ENCODE measurements at regions of chr18 and their contacts with region 1.

Region 1: DNA sequence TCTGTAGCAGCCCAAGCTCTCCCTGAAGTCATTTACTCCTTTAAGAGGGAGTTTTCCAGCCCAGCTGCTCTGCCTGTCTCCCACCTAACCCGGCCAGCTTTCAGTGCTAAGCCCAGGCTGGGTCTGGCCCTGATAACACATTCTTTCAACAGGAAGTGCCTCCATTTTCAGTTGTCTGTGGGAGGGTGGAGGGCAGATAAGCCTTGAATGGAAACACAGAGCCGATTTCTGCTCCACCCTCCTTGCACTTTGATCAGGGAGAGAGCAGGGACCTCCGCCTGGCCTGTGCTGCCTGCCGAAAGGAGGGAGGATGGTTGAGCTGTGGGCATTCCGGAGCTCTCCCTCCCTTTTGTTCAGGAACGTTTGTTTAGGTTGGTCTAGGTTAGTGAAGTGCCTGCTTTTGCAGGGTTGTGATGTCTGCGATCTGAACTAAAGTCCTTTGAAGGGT is 24.8 kb downstream of the GATA6 start:
- DNase-seq: peak; percentile 68
- H3K4me3 Mint-ChIP-seq: peak overlapping the region; percentile 64
- H3K27ac Mint-ChIP-seq: peak overlapping the region; percentile 94
- H3K4me1 Mint-ChIP-seq: peaks cover 86% of the 10 kb centered on the region
- H3K27me3 Mint-ChIP-seq: no peaks in the 10 kb centered on the region
- CTCF ChIP-seq: no peak

Region 2: DNA sequence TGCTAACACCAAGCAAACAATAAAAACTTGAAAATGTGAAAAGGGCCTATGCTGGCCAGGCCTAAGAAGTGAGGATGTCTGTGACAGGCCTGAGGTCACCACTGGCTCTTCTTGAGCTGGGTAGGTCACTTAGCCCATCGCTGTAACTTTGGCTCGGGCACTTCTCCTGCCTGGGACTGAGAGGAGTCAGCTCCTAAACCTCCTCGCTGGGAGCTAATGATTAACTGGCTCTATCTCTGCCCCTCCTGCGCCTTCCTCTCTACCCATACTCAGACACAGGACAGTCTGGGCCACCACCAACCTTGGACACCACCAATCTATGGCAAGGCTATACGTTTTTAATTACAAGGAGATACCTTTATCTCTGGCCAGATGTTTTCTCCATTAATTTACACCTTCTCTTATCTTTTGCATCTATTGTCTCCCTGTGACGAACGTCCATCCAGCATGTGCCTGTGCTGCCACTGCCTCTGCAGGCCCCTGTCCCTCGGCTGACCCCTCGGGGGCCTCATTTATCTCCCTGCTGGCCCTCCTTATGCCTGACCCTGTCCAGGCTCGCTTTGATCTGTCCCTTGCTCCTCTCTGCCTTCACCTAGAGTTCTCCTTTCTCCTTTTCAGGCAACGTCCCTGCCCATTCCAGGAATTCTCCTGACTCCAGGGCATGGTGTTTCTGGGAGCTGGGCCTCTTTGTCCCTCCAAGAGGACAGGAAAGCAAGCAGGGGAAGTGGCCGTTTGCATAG is 173.9 kb before region 1 on chr18:
- CTCF ChIA-PET with region 1: no interaction called
- intact Hi-C with region 1: no loop called
- DNase-seq: no peak
- H3K4me3 Mint-ChIP-seq: no peak overlapping the region
- H3K27ac Mint-ChIP-seq: no peak overlapping the region
- H3K4me1 Mint-ChIP-seq: peaks cover 22% of the 10 kb centered on the region
- H3K27me3 Mint-ChIP-seq: no peaks in the 10 kb centered on the region
- CTCF ChIP-seq: no peak

Region 3: DNA sequence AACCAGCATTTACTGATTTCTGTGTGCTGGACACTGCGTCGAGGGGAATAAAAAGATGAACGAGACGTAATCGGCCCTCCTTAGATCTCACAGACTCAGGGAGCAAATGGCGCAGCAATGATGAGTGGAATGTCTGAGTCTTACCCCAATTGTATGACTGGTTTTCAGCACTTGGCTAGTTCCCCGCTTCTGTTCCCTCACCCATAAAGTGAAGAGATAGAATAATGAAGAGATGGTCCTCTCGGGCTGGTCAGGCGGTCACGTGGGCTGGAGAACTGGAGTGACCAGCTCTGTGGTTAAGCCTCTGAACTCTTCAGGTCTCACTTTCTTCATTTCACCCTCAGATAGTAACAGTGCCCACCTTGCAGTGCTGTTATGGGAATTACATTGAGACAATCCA is 42.0 kb before region 1 on chr18:
- CTCF ChIA-PET with region 1: no interaction called
- intact Hi-C with region 1: no loop called
- DNase-seq: no peak
- H3K4me3 Mint-ChIP-seq: no peak overlapping the region
- H3K27ac Mint-ChIP-seq: no peak overlapping the region
- H3K4me1 Mint-ChIP-seq: no peaks in the 10 kb centered on the region
- H3K27me3 Mint-ChIP-seq: peaks cover 9% of the 10 kb centered on the region
- CTCF ChIP-seq: no peak

Region 4: DNA sequence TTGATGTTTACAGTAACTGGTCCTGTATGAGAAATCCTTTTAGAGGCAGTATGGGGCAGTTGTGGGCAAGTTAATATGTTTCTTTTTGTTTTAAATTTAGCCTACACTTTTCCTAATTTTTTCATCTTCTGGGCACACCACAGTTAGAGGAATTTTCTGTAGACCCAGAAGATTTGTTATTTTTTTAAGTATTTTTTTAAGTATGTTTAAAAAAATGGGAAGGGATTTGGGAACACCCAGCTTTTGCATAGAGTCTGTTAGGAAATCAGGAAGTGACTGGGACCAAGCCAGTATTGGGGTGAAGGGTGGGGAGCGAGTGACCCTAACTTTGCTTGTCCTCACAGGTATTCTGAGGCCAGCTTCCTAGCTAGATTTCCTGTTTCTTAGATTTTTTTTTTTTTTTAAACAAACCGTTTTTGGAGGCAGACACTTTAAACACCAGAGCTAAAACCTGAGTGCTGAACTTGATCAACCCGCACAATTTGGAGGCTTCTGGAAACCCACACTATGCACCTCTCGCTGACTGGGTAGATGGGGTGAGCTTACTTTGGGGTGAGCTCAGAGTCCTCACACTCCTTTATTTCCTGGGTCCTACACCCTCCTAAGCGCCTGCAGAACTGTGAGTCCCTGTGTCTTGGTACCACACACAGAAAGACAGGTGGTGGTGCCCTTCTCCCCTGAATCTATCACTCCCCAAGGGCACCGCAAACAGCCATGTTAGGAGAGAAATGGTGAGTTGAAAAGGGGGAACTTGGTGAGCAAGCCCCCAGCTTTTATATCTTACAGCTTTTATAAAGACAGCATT is 19.6 kb before region 1 on chr18:
- CTCF ChIA-PET with region 1: interaction called, 10 read pairs
- intact Hi-C with region 1: loop called (anchors 2 kb)
- DNase-seq: no peak
- H3K4me3 Mint-ChIP-seq: peak overlapping the region; percentile 98
- H3K27ac Mint-ChIP-seq: peak overlapping the region; percentile 98
- H3K4me1 Mint-ChIP-seq: peaks cover 1% of the 10 kb centered on the region
- H3K27me3 Mint-ChIP-seq: no peaks in the 10 kb centered on the region
- CTCF ChIP-seq: no peak

Region 5: GRCh38 chr18:22282311-22283112 is 88.3 kb after region 1 on chr18:
- CTCF ChIA-PET with region 1: interaction called, 4 read pairs
- intact Hi-C with region 1: loop called (anchors 1 kb)
- DNase-seq: peak; percentile 69
- H3K4me3 Mint-ChIP-seq: peak overlapping the region; percentile 41
- H3K27ac Mint-ChIP-seq: peak overlapping the region; percentile 98
- H3K4me1 Mint-ChIP-seq: peaks cover 70% of the 10 kb centered on the region
- H3K27me3 Mint-ChIP-seq: no peaks in the 10 kb centered on the region
- CTCF ChIP-seq: no peak

Region 6: DNA sequence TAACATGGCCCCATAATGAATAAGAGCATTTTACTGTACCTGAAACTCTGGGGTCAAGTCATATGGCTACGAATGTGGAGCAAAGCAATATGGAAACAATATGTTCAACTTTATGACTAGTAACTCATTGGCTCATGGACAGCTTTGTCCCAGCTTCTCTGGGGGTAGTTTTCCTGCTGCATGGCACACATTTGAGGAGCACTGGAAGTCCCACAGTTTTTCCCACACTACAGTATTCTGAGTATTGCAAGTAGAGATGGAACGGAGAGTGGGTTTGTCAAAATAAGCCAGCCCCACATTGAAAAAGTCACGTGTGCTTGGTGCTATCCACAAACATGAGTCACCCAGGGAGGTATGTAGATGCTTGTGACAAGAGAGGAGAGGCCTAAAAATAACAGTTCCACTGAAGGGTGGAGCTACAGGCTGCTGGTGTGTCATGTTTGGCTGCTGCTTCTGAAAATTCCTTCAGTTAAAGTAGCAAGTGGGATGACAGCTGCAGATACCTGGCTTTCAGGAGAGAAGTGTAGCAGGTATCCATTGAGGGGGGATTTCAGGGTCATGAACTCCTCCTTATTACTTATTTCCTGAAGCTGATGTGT is 271.8 kb after region 1 on chr18:
- CTCF ChIA-PET with region 1: no interaction called
- intact Hi-C with region 1: loop called (anchors 2 kb)
- DNase-seq: peak; percentile 70
- H3K4me3 Mint-ChIP-seq: peak overlapping the region; percentile 64
- H3K27ac Mint-ChIP-seq: peak overlapping the region; percentile 100
- H3K4me1 Mint-ChIP-seq: peaks cover 70% of the 10 kb centered on the region
- H3K27me3 Mint-ChIP-seq: no peaks in the 10 kb centered on the region
- CTCF ChIP-seq: no peak